ENCODE measurements at regions of chr15 and their contacts with region 1.

Region 1: GRCh38 chr15:44286814-44287452 is 1.6 kb upstream of the GOLM2 start:
- DNase-seq: no peak

Region 2: DNA sequence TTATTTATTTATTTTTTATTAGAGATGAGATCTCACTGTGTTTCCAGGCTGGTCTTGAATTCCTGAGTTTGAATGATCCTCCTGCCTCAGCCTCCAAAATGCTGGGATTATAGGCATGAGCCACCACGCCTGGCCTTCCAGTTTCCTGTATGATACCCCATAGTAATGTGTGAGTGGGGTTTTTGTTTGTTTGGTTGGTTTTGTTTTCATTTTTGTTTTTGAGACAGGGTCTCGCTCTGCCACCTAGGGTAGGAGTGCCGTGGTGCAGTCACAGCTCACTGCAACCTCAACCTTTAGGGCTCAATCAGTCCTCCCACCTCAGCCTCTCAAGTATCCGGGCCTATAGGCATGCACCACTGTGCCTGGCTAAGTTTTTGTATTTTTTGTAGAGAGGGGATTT is 32.5 kb after region 1 on chr15:
- intact Hi-C with region 1: no loop called
- DNase-seq: no peak

Region 3: DNA sequence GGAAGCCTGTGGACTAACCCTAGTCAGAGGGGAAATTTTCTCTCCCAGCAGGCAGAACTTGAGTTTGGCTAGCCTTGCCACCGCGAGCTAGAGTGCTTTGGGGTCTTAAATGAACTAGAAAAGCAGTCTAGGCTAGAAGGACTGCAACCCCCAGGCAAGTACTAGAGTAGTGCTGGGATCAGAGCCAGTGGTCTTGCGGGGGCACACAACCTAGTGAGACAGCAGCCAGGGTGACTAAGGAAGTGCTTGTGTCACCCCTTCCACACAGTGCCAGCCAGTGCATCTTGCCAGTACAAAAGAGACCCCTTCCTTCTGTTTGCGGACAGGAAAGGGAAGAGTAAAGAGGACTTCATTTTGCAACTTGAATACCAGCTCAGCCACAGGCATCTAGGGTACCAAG is 60.6 kb after region 1 on chr15:
- intact Hi-C with region 1: no loop called
- DNase-seq: no peak

Region 4: DNA sequence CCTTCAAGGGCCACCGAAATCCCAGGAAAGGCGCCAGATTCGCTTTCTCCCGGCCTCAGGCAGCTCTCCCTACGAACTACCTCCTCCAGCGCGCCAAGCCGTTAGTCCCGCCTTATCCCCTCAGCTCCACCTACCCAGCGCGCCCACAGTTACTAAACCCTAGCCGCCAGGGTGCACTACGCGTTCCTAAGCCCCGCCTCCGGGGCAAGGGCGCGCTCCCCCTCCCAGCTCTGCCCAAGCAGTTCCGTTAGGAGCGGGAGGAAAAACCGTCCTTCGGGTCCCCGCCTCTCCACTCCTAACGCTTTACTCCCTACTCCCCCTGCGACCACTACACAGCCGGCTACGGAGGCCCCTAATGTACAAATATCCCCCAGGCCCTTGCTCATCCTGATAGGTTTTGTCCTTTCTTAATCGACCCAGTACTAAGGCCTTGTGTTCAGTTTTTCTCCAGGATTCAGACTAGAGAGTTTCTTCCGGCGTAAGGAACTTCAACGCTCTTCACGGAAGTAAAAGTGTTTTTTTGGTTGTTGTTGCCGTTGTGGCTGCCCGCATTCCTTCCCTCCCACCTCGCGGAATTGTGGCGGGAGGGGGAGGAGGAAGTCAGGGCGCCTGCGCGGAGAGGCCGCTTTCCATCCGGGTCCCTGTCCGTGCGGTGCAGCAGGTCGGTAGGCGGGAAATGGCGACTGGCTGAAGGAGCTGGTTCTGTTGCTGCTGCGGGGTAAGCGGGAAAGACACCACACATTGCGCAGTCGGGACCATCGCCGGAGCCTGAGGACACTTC is 140.2 kb after region 1 on chr15 and contains the start of gene CTDSPL2:
- intact Hi-C with region 1: loop called (anchors 2 kb)
- DNase-seq: peak; percentile 96 to 100 (median 97)

Region 5: DNA sequence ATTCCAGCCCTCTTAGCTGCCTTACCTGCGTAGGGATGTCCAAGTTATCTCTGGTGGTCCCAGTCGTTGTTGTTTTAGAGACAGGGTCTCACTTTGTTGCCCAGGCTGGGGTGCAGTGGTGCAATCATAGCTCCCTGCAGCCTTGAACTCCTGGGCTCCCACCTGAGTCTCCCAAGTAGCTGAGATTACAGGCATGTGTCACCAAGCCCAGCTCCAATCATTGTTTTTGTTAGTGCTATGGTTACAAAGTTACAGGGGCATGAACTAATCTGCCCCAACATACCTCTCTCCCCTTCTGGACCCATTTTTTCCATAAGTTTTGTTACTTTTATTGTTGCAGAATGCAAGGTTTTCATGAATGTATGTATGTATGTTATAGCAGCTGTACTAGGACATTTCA is 195.2 kb after region 1 on chr15:
- intact Hi-C with region 1: no loop called
- DNase-seq: no peak

Region 6: GRCh38 chr15:44918136-44918535 is 631.2 kb after region 1 on chr15:
- intact Hi-C with region 1: no loop called
- DNase-seq: no peak

Measured in posterior cingulate gyrus (tissue), 11 donors.